Activated naive CD4-positive, alpha-beta T cell treated with anti-CD3 and anti-CD28 coated beads for 36 hours (primary cell): ENCODE measurements at regions of chr7 and their contacts with region 1.

Region 1: GRCh38 chr7:131068604-131069021 is 259.1 kb upstream of the MKLN1 start:
- DNase-seq: no peak
- H3K4me3 Mint-ChIP-seq: no peak overlapping the region
- H3K27ac Mint-ChIP-seq: peak overlapping the region; percentile 86
- H3K4me1 Mint-ChIP-seq: peaks cover 73% of the 10 kb centered on the region
- H3K27me3 Mint-ChIP-seq: no peaks in the 10 kb centered on the region

Region 2: DNA sequence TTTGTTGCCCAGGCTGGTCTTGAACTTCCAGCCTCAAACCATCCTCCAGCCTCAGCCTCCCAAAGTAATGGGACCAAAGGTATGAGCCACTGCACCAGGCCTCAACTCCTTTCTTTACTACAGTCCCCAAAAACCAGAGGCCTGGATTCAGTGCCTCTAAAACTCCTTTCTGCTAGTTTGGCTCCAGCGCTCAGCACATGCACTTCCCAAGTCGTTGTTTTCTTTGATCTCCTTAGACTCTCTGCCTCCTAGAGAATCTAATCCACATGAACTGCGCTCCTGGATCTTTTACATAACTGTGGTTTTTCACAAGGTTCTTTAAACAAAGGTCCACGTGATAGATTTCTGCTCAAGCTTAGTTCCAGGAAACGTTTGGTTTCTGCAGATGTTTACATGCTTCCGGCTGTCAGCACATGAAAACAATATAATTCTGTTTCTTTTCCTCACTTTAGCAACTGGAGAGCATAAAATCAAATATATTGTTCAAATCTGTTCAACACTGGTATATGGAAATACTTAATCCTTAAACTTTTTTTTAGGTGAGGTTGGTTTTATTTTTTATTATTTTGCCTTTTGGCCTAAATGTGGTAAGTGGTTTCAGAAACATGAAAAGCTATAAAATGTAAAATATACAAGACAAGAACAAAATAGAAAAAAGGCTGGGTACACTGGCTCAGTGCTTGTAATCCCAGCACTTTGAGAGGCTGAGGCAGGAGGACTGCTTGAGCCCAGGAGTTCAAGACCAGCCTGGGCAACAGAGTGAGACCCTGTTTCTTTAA is 11.4 kb before region 1 on chr7:
- CTCF ChIA-PET with region 1: interaction called, 14 read pairs
- intact Hi-C with region 1: no loop called
- DNase-seq: peak; percentile 43
- H3K4me3 Mint-ChIP-seq: peak overlapping the region; percentile 66
- H3K27ac Mint-ChIP-seq: peak overlapping the region; percentile 98
- H3K4me1 Mint-ChIP-seq: peaks cover 65% of the 10 kb centered on the region
- H3K27me3 Mint-ChIP-seq: no peaks in the 10 kb centered on the region

Region 3: GRCh38 chr7:131100357-131101054 is 31.9 kb after region 1 on chr7:
- CTCF ChIA-PET with region 1: interaction called, 14 read pairs
- intact Hi-C with region 1: no loop called
- DNase-seq: no peak
- H3K4me3 Mint-ChIP-seq: peak overlapping the region; percentile 28
- H3K27ac Mint-ChIP-seq: peak overlapping the region; percentile 48
- H3K4me1 Mint-ChIP-seq: peaks cover 83% of the 10 kb centered on the region
- H3K27me3 Mint-ChIP-seq: no peaks in the 10 kb centered on the region

Region 4: DNA sequence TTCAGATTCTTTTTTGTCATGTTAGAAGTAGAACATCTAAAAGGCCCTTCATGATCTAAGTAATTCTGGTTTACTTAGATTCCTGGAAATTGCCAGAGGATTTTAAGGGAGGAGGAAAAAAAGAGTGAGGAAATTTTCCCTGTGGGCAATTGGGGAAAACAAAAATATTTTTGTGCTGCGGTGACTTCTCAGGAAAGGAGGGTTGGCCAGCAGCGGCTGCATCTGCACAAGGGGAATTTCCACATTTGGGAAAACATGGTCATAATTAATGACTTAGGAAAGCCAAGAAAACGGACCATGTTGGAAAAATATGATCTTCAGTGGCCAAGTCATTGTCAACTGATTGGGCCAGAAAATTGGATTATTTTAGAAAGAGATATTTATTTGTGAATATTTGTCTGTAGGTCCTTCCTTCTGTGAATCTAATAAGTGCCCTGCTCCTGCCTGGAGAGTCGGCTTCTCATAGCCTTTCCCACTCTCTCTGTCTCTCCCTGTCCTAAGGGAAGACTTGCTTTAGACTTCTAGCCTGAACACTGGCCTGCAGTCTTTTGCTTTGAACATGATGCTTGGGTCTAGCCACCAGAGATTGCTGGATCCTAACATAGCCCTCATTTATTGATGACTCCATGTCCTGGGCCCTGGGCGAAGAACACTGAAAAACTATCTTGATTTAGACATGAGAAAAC is 134.8 kb after region 1 on chr7:
- CTCF ChIA-PET with region 1: no interaction called
- intact Hi-C with region 1: no loop called
- DNase-seq: no peak
- H3K4me3 Mint-ChIP-seq: no peak overlapping the region
- H3K27ac Mint-ChIP-seq: no peak overlapping the region
- H3K4me1 Mint-ChIP-seq: peaks cover 3% of the 10 kb centered on the region
- H3K27me3 Mint-ChIP-seq: no peaks in the 10 kb centered on the region

Region 5: GRCh38 chr7:131231381-131232220 is 163.0 kb after region 1 on chr7:
- CTCF ChIA-PET with region 1: interaction called, 4 read pairs
- intact Hi-C with region 1: loop called (anchors 1 kb)
- DNase-seq: peak; percentile 80
- H3K4me3 Mint-ChIP-seq: peak overlapping the region; percentile 57
- H3K27ac Mint-ChIP-seq: peak overlapping the region; percentile 86
- H3K4me1 Mint-ChIP-seq: peaks cover 45% of the 10 kb centered on the region
- H3K27me3 Mint-ChIP-seq: no peaks in the 10 kb centered on the region

Region 6: GRCh38 chr7:131327626-131328376 is 259.2 kb after region 1 on chr7 and contains the start of gene MKLN1:
- CTCF ChIA-PET with region 1: no interaction called
- intact Hi-C with region 1: loop called (anchors 1 kb)
- DNase-seq: peak; percentile 90
- H3K4me3 Mint-ChIP-seq: peak within 1 kb of the TSS; percentile 98
- H3K27ac Mint-ChIP-seq: peak within 1 kb of the TSS; percentile 96
- H3K4me1 Mint-ChIP-seq: peaks cover 54% of the 10 kb centered on the region
- H3K27me3 Mint-ChIP-seq: no peaks in the 10 kb centered on the region
- total RNA-seq, gene MKLN1: 29.8 to 34.9 TPM